WTC11 (cell line): ENCODE measurements at regions of chr12 and their contacts with region 1.

Region 1: DNA sequence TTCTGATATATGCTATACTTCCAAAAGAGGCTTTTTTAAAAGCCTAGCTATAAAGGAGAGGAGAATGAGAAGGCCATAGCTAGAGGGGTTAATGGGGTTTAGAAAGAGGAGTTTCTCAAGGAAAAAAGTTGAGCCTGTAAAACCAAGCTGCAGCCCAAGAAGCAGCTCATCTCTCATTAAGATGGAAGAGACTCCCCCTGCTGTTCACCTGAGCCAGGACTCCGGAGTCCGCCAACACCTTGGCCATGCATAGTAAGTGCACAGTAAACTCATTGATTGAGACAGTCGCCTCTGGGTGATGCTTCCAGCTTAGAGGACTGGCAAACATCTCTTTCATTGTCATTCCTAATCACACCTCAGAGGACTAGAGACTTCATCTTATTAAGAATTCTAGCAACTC is 46.2 kb downstream of the ANO2 start:
- DNase-seq: peak; percentile 47
- ATAC-seq: peak; percentile 80
- H3K4me3 Mint-ChIP-seq: no peak overlapping the region
- H3K27ac Mint-ChIP-seq: no peak overlapping the region
- H3K4me1 Mint-ChIP-seq: peaks cover 12% of the 10 kb centered on the region
- H3K27me3 Mint-ChIP-seq: peaks cover 2% of the 10 kb centered on the region; the same call in 1 of the 2 replicates
- CTCF ChIP-seq: no peak

Region 2: GRCh38 chr12:5840944-5841343 is 57.9 kb before region 1 on chr12:
- CTCF ChIA-PET with region 1: interaction called, 10 read pairs
- POLR2A ChIA-PET with region 1: no interaction called
- DNase-seq: no peak
- ATAC-seq: peak; percentile 52
- H3K4me3 Mint-ChIP-seq: no peak overlapping the region
- H3K27ac Mint-ChIP-seq: no peak overlapping the region
- H3K4me1 Mint-ChIP-seq: no peaks in the 10 kb centered on the region
- H3K27me3 Mint-ChIP-seq: no peaks in the 10 kb centered on the region
- CTCF ChIP-seq: no peak

Region 3: DNA sequence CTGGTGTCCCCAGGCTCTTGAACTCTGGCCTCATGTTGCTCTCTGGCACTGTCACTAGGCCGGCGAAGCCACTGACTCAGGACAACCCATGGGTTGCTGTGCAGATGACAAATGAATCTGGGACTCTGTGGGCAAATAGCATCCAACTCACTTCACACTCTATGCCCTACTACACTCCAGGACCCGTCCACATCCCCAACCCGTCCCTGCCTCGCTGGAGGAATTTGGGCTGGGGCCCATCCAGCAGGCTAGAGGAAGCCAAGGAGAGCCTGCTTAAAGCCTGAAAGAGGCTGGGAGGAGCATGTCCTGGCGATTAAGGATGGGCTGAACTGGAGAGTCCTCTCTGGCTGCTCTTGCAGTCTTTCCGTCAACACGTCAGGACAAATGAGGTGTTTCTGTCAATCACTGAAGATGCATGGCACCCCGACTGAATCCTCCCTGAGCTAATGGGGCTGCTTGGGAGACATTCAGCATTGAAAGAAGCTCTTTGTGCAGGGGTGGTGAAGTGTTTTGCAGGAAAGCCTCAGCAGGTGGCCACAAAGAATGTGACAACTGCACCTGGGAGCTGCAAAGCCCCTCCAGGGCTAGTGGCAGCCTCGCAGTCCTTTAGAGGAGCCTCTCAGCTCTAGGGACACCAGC is 25.5 kb before region 1 on chr12:
- CTCF ChIA-PET with region 1: interaction called, 19 read pairs
- POLR2A ChIA-PET with region 1: no interaction called
- DNase-seq: peak; percentile 23
- ATAC-seq: peak; percentile 60
- H3K4me3 Mint-ChIP-seq: no peak overlapping the region
- H3K27ac Mint-ChIP-seq: no peak overlapping the region
- H3K4me1 Mint-ChIP-seq: peaks cover 23% of the 10 kb centered on the region
- H3K27me3 Mint-ChIP-seq: no peaks in the 10 kb centered on the region
- CTCF ChIP-seq: no peak

Region 4: DNA sequence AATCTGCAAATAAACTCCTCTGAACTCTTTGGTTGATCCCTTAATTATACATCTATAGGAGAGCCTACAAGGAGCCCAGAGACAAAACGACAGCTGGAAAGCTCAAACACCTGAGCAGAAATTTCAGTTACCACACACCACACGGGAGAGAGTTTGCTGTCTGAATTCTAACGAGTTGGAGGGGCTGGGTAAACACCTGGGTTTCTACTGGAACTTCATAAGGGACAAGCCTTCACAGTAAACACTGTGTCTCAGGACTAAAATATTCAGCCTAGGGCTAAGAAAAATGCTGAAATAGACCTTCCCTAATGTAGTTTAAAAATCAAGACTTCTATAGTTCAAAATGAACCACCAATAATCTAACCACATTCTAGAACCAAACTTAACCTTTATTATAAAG is 55.8 kb after region 1 on chr12:
- CTCF ChIA-PET with region 1: no interaction called
- POLR2A ChIA-PET with region 1: no interaction called
- DNase-seq: no peak
- ATAC-seq: no peak
- H3K4me3 Mint-ChIP-seq: no peak overlapping the region
- H3K27ac Mint-ChIP-seq: no peak overlapping the region
- H3K4me1 Mint-ChIP-seq: peaks cover 2% of the 10 kb centered on the region; the same call in 1 of the 2 replicates
- H3K27me3 Mint-ChIP-seq: peaks cover 4% of the 10 kb centered on the region
- CTCF ChIP-seq: no peak